Posterior cingulate gyrus (tissue), 11 donors: ENCODE measurements at regions of chr5 and their contacts with region 1.

Region 1: GRCh38 chr5:472656-473553 is 29.9 kb downstream of the EXOC3 start:
- DNase-seq: peak; percentile 67 to 98 (median 84)

Region 2: GRCh38 chr5:442335-443238 is 30.3 kb before region 1 on chr5 and contains the start of gene EXOC3:
- intact Hi-C with region 1: loop called (anchors 2 kb)
- DNase-seq: peak; percentile 61 to 97 (median 77)

Region 3: DNA sequence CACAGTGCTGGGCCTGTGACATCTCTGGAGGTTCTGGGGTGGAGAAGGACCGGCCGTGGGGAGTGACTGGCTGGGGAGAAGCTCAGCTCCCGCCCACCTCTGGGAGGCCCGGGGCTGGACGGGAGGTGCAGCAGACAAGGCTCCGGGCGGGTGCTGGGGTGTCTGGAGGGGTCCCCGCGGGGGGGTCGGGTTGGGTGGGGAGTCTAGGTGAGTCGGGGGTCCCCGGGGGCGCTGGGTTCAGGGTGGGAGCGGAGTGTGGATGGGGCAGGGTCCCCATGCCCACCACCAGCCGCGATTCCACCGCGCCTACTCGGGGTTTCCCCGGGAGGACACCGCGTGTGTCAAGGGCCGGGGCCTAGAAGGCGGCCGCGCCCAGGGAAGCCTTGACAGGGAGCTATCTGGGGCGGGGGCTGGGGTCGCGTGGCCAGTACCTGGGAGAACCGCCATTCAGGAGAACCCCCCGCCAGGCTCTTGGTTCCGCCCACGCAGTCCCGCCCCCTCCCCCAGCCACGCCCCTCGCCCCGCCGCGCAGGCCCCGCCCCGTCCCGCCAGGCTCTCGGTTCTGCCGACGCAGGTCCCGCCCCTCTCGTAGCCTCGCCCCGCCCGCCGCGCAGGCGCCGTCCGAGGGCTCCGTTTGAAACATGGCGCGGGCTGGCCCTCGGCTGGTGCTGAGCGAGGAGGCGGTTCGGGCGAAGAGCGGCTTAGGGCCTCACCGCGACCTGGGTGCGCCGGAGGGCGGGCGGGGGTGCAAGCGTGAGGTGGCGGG is 139.0 kb after region 1 on chr5 and contains the start of gene CEP72:
- intact Hi-C with region 1: loop called (anchors 5 kb)
- DNase-seq: peak; percentile 85 to 99 (median 93)